Activated naive CD4-positive, alpha-beta T cell treated with anti-CD3 and anti-CD28 coated beads for 36 hours (primary cell): ENCODE measurements at regions of chr14 and their contacts with region 1.

Region 1: GRCh38 chr14:106277503-106277902 is 751.1 kb downstream of the TMEM121 start:
- DNase-seq: peak; percentile 50
- H3K4me3 Mint-ChIP-seq: no peak overlapping the region
- H3K27ac Mint-ChIP-seq: no peak overlapping the region
- H3K4me1 Mint-ChIP-seq: peaks cover 17% of the 10 kb centered on the region
- H3K27me3 Mint-ChIP-seq: peaks cover 25% of the 10 kb centered on the region

Region 2: DNA sequence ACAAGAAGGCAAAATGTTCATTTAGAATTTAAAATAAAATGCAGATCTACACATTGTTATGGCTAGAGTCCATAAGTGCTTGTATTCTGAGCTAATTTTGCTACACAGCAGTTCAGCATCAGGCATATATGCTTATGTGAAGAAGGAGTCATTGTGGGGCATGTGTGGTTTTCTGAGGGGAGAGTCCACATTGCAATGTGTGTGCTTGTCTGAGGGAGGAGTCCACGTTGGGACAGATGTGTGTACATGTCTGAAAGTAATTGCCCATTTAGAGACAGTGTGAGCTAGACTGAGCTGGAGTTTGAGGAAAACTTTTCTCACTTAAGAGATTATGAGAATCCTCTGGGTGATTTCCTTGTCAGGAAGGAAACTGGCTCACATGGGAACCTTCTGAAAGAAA is 16.8 kb after region 1 on chr14:
- CTCF ChIA-PET with region 1: interaction called, 11 read pairs
- intact Hi-C with region 1: no loop called
- DNase-seq: no peak
- H3K4me3 Mint-ChIP-seq: no peak overlapping the region
- H3K27ac Mint-ChIP-seq: no peak overlapping the region
- H3K4me1 Mint-ChIP-seq: no peaks in the 10 kb centered on the region
- H3K27me3 Mint-ChIP-seq: peaks cover 9% of the 10 kb centered on the region

Region 3: DNA sequence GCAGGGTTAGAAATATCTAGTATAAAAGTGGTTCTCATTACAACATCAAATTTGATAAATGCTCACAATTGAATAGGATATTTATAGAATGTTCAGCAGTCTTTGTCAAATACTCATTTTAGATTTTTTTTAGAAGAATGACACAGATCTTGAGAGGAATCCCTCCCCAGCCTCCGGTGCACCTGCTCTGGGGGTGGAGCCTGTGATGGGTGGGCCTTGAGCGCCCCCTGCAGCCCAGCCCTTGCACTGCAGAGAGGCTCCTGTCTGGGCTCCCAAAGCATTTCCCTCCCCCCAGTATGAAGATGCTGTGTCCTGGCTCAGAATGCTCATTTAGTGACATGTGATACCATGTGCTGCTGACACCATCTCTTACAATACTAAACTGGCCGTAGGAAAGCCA is 41.2 kb after region 1 on chr14:
- CTCF ChIA-PET with region 1: interaction called, 4 read pairs
- intact Hi-C with region 1: loop called (anchors 5 kb)
- DNase-seq: peak; percentile 81
- H3K4me3 Mint-ChIP-seq: no peak overlapping the region
- H3K27ac Mint-ChIP-seq: no peak overlapping the region
- H3K4me1 Mint-ChIP-seq: no peaks in the 10 kb centered on the region
- H3K27me3 Mint-ChIP-seq: peaks cover 3% of the 10 kb centered on the region